MCF 10A (cell line): ENCODE measurements at regions of chr11 and their contacts with region 1.

Region 1: DNA sequence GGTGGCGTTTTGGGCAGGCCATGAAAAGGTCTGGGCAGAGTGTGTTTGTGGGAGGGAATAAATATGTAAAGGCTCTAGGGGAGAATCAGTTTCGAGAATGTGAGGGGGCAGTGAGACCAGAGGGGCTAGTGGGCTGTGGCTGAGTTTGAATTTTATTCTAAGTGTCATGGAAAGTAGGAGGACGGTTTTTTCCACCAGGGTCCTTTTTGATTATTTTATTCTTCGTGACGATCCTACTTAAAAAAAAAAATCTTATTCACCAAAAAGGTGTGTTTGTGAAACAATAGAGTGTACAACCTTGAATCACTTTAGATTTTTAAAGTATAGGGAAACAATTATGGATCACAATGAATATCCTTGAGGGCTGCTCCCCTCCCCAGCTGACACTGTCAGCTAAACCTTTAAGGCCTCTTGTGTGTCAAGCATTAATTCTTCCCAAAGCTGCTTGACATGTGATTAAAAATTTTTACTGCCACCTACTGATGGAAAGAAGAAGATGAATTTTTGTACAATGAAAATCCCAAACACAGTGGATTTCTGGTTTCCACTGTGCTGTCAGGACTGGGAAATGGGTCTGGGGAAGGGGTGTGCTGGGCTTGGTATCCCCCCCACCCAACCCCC is 107.5 kb upstream of the OR4B1 start:
- DNase-seq: peak; percentile 54
- H3K4me3 Mint-ChIP-seq: peak overlapping the region; percentile 66
- H3K27ac Mint-ChIP-seq: no peak overlapping the region
- H3K4me1 Mint-ChIP-seq: peaks cover 6% of the 10 kb centered on the region
- H3K27me3 Mint-ChIP-seq: no peaks in the 10 kb centered on the region
- CTCF ChIP-seq: peak; percentile 28

Region 2: DNA sequence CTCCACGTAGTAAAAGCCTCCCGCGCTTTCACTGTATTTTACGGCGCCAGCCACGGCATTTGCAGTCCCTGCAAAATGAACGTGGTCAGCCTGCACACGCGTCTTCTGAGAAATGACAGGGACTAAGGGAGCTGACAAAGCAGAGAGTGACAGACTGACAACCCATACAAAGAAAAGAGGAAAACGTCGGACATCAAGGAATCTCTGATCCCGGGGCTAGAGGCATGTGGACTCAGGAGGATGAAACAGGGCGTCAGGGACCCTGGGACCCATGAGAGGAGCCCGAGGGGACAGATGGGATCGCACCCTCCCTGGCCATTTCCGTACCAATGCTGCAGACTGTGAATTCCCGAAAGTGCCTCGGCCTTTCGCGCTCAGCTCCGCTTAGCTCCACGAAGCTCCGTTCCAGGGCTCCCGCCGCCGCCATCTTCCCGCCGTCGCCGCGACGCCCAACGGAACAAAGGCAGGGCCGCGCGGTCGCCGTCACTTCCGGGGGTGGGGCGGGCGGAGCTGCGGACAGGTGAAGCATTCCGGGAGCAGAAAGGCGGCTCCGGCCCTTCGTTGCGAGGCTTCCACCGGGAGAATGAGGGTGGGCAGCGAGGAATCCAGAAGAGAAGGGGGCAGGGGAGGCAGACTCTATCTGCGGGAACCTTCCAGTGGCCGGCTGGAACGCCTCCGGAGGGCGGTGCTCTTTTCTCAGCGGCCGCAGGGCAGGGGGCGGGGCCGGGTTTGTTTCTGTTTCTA is 261.1 kb before region 1 on chr11 and contains the start of gene NUP160:
- CTCF ChIA-PET with region 1: interaction called, 11 read pairs
- POLR2A ChIA-PET with region 1: interaction called, 3 read pairs
- intact Hi-C with region 1: no loop called
- DNase-seq: peak; percentile 66
- H3K4me3 Mint-ChIP-seq: peak within 1 kb of the TSS; percentile 90
- H3K27ac Mint-ChIP-seq: peak within 1 kb of the TSS; percentile 93
- H3K4me1 Mint-ChIP-seq: peaks cover 27% of the 10 kb centered on the region
- H3K27me3 Mint-ChIP-seq: no peaks in the 10 kb centered on the region
- CTCF ChIP-seq: no peak
- total RNA-seq, gene NUP160: 32.0 and 33.8 TPM in 2 replicates

Region 3: GRCh38 chr11:47924184-47924691 is 184.9 kb before region 1 on chr11:
- CTCF ChIA-PET with region 1: interaction called, 13 read pairs
- POLR2A ChIA-PET with region 1: interaction called, 3 read pairs
- intact Hi-C with region 1: no loop called
- DNase-seq: peak; percentile 42
- H3K4me3 Mint-ChIP-seq: no peak overlapping the region
- H3K27ac Mint-ChIP-seq: peak overlapping the region; percentile 42
- H3K4me1 Mint-ChIP-seq: peaks cover 8% of the 10 kb centered on the region
- H3K27me3 Mint-ChIP-seq: no peaks in the 10 kb centered on the region
- CTCF ChIP-seq: no peak

Region 4: DNA sequence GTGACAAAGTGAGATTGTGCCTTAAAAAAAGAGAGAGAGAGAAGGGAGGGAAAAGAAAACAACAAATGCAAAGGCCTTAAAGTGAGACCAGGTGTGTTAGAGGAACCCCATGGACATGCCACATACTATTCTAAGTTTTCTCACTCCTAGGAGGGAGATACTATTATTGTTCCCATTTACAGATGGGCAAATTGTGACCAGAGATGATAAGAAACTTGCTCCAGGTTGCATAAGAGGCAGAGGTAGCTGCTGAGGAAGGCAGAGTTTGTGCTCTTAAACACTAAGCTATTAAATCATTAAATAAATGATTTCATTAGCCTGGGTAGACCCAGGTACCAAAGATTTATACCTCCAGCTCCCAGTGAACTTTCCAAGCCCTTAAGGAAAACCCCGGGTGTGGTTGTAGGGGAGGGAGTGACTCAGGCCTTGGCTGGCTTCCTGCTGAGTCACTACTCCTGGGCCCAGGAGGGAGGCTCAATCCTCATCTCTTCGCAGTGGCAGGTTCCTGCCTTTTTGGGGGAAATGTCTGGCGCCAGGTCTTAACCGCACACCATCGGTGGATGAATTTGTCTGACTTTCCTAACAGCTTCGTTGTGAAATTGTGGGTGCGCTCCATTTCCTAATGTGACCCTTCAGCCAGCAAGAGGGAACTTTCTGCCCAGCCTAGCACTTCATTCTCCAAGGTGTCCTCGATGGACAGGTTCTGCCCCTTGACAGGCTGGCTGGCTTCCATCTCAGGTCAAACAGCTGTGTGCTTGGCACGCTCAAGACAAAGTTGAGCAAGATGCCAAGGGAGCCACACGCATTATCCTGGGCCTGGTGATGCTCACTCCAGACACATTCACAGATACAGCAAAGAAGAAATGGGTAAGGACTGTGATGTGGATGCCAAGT is 162.2 kb before region 1 on chr11:
- CTCF ChIA-PET with region 1: interaction called, 451 read pairs
- POLR2A ChIA-PET with region 1: no interaction called
- intact Hi-C with region 1: no loop called
- DNase-seq: peak; percentile 99
- H3K4me3 Mint-ChIP-seq: no peak overlapping the region
- H3K27ac Mint-ChIP-seq: no peak overlapping the region
- H3K4me1 Mint-ChIP-seq: peaks cover 18% of the 10 kb centered on the region
- H3K27me3 Mint-ChIP-seq: no peaks in the 10 kb centered on the region
- CTCF ChIP-seq: no peak

Region 5: GRCh38 chr11:47980245-47981049 is 128.7 kb before region 1 on chr11 and contains the start of gene PTPRJ:
- CTCF ChIA-PET with region 1: interaction called, 3 read pairs
- POLR2A ChIA-PET with region 1: no interaction called
- intact Hi-C with region 1: loop called (anchors 5 kb)
- DNase-seq: no peak
- H3K4me3 Mint-ChIP-seq: peak within 1 kb of the TSS; percentile 54
- H3K27ac Mint-ChIP-seq: no peak within 1 kb of the TSS
- H3K4me1 Mint-ChIP-seq: no peaks in the 10 kb centered on the region
- H3K27me3 Mint-ChIP-seq: peaks cover 12% of the 10 kb centered on the region
- CTCF ChIP-seq: no peak
- total RNA-seq, gene PTPRJ: 0.30 and 0.61 TPM in 2 replicates

Region 6: GRCh38 chr11:48122246-48122645 is 13.1 kb after region 1 on chr11:
- CTCF ChIA-PET with region 1: interaction called, 11 read pairs
- POLR2A ChIA-PET with region 1: no interaction called
- intact Hi-C with region 1: no loop called
- DNase-seq: no peak
- H3K4me3 Mint-ChIP-seq: no peak overlapping the region
- H3K27ac Mint-ChIP-seq: no peak overlapping the region
- H3K4me1 Mint-ChIP-seq: no peaks in the 10 kb centered on the region
- H3K27me3 Mint-ChIP-seq: no peaks in the 10 kb centered on the region
- CTCF ChIP-seq: no peak

Region 7: DNA sequence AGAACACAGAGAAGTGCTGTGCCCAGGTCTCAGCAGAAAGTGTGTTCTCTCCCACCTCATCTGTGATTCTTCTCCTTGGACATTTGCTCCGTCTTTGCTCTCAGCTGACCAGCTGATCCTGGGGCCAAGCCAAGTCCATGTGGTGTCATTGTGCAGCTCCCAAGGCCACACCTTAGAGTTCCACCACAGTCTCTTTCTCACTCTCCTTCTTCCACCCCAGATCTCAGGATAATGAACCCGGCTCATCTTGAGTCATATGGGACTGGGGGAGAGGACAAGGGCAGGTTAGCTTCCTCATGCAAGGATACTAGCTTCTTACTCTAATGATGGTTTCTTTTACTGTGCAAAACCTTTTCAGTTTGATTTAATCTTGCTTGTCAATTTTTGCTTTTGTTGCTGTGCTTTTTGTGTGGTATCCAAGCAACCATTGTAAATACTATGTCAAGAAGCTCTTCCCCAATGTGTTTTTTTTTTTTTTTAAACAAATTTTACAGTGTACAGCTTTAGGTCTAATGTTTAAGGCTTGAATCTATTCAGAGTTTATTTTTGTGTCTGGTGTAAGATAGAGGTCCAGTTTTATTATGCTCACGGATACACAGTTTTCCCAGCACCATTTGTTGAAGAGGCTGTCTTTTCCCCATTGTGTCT is 32.4 kb after region 1 on chr11:
- CTCF ChIA-PET with region 1: no interaction called
- POLR2A ChIA-PET with region 1: no interaction called
- intact Hi-C with region 1: no loop called
- DNase-seq: peak; percentile 8
- H3K4me3 Mint-ChIP-seq: no peak overlapping the region
- H3K27ac Mint-ChIP-seq: no peak overlapping the region
- H3K4me1 Mint-ChIP-seq: no peaks in the 10 kb centered on the region
- H3K27me3 Mint-ChIP-seq: no peaks in the 10 kb centered on the region
- CTCF ChIP-seq: no peak